ENCODE measurements at regions of chr14 and their contacts with region 1.

Region 1: GRCh38 chr14:22766456-22767322 is at the start of gene OXA1L:
- DNase-seq: peak; percentile 95 to 98 (median 98)
- H3K4me3 ChIP-seq: peak within 1 kb of the TSS; percentile 62 to 88
- H3K4me3 Mint-ChIP-seq: peak within 1 kb of the TSS; percentile 85 to 96 (median 94)
- H3K27ac ChIP-seq: peak within 1 kb of the TSS; percentile 88
- H3K27ac Mint-ChIP-seq: peak within 1 kb of the TSS; percentile 86 to 100 (median 98)
- H3K4me1 ChIP-seq: peaks cover 24% of the 10 kb centered on the region
- H3K4me1 Mint-ChIP-seq: peaks cover 26 to 39% (median 34%) of the 10 kb centered on the region in 4 donors
- H3K27me3 ChIP-seq: no peaks in the 10 kb centered on the region
- H3K27me3 Mint-ChIP-seq: no peaks in the 10 kb centered on the region
- total RNA-seq, gene OXA1L: 129 to 137 TPM

Region 2: GRCh38 chr14:22713631-22713950 is 53.1 kb before region 1 on chr14:
- CTCF ChIA-PET with region 1: no interaction called
- POLR2A ChIA-PET with region 1: no interaction called
- intact Hi-C with region 1: loop called (anchors 2 kb)
- DNase-seq: no peak
- H3K4me3 ChIP-seq: peak overlapping the region in 1 of 2 donors; percentile 28
- H3K4me3 Mint-ChIP-seq: peak overlapping the region; percentile 81 to 92 (median 86)
- H3K27ac ChIP-seq: no peak overlapping the region
- H3K27ac Mint-ChIP-seq: peak overlapping the region in 3 of 7 donors; percentile 48 to 94 (median 81)
- H3K4me1 ChIP-seq: no peaks in the 10 kb centered on the region
- H3K4me1 Mint-ChIP-seq: peaks cover 5 to 13% (median 10%) of the 10 kb centered on the region in 4 donors
- H3K27me3 ChIP-seq: no peaks in the 10 kb centered on the region
- H3K27me3 Mint-ChIP-seq: peaks cover 13 to 31% of the 10 kb centered on the region in 2 donors

Region 3: GRCh38 chr14:22802860-22803686 is 36.4 kb after region 1 on chr14:
- CTCF ChIA-PET with region 1: no interaction called
- POLR2A ChIA-PET with region 1: no interaction called
- intact Hi-C with region 1: no loop called
- DNase-seq: no peak
- H3K4me3 ChIP-seq: no peak overlapping the region
- H3K4me3 Mint-ChIP-seq: no peak overlapping the region
- H3K27ac ChIP-seq: no peak overlapping the region
- H3K27ac Mint-ChIP-seq: no peak overlapping the region
- H3K4me1 ChIP-seq: no peaks in the 10 kb centered on the region
- H3K4me1 Mint-ChIP-seq: no peaks in the 10 kb centered on the region
- H3K27me3 ChIP-seq: no peaks in the 10 kb centered on the region
- H3K27me3 Mint-ChIP-seq: peaks cover 32 to 33% of the 10 kb centered on the region in 2 donors

Region 4: DNA sequence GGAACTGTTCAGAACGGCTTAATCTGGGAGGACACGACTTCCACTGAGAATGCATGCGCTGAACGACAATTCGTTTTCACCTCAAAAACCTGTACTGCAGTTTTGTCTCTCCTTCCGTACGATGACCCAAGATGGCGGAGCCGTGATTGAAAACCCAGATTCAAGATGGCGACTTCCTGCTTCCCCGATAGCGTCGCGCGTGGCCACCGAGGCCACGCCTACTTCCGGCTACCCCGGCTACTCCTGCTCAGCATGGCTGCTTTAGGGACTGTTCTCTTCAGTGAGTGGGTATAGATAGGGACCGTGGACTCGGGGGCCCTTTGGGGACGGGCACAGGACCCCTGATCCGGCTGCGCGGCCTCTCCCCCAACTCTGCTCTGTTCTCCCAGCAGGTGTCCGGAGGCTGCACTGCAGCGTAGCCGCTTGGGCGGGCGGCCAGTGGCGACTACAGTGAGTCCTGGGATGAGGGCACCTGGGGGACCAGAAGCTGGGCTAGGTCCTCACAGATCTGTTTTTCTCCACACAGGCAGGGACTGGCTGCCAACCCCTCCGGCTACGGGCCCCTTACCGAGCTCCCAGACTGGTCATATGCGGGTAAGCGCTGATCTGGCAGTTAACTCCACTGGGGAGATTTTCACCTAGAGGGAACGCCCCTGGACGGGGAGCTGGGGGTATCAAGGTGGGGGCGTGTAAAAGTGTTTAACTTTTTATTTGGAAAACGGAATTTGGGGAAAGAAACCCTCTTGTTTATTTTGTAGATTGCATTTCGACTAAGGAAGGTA is 63.2 kb after region 1 on chr14 and contains the start of gene MRPL52:
- CTCF ChIA-PET with region 1: no interaction called
- POLR2A ChIA-PET with region 1: interaction called, 12 read pairs
- intact Hi-C with region 1: loop called (anchors 1 kb)
- DNase-seq: peak; percentile 86 to 93 (median 88)
- H3K4me3 ChIP-seq: peak within 1 kb of the TSS; percentile 80 to 85
- H3K4me3 Mint-ChIP-seq: peak within 1 kb of the TSS; percentile 91 to 96 (median 92)
- H3K27ac ChIP-seq: peak within 1 kb of the TSS; percentile 85
- H3K27ac Mint-ChIP-seq: peak within 1 kb of the TSS; percentile 96 to 99 (median 98)
- H3K4me1 ChIP-seq: peaks cover 18% of the 10 kb centered on the region
- H3K4me1 Mint-ChIP-seq: peaks cover 17 to 32% (median 24%) of the 10 kb centered on the region in 4 donors
- H3K27me3 ChIP-seq: no peaks in the 10 kb centered on the region
- H3K27me3 Mint-ChIP-seq: peaks cover 0 to 1% of the 10 kb centered on the region in 2 donors
- total RNA-seq, gene MRPL52: 58.0 to 68.3 TPM

Region 5: GRCh38 chr14:22908601-22909000 is 141.9 kb after region 1 on chr14:
- CTCF ChIA-PET with region 1: no interaction called
- POLR2A ChIA-PET with region 1: no interaction called
- intact Hi-C with region 1: no loop called
- DNase-seq: no peak
- H3K4me3 ChIP-seq: no peak overlapping the region
- H3K4me3 Mint-ChIP-seq: no peak overlapping the region
- H3K27ac ChIP-seq: no peak overlapping the region
- H3K27ac Mint-ChIP-seq: peak overlapping the region in 2 of 7 donors; percentile 42 to 75
- H3K4me1 ChIP-seq: peaks cover 10% of the 10 kb centered on the region
- H3K4me1 Mint-ChIP-seq: peaks cover 10 to 21% (median 17%) of the 10 kb centered on the region in 4 donors
- H3K27me3 ChIP-seq: no peaks in the 10 kb centered on the region
- H3K27me3 Mint-ChIP-seq: no peaks in the 10 kb centered on the region

Region 6: GRCh38 chr14:23034483-23035302 is 268.0 kb after region 1 on chr14 and contains the start of gene PSMB5:
- CTCF ChIA-PET with region 1: no interaction called
- POLR2A ChIA-PET with region 1: no interaction called
- intact Hi-C with region 1: loop called (anchors 1 kb)
- DNase-seq: peak; percentile 93 to 96 (median 93)
- H3K4me3 ChIP-seq: peak within 1 kb of the TSS; percentile 66 to 90
- H3K4me3 Mint-ChIP-seq: peak within 1 kb of the TSS; percentile 87 to 98 (median 93)
- H3K27ac ChIP-seq: peak within 1 kb of the TSS; percentile 89
- H3K27ac Mint-ChIP-seq: peak within 1 kb of the TSS; percentile 89 to 99 (median 98)
- H3K4me1 ChIP-seq: peaks cover 19% of the 10 kb centered on the region
- H3K4me1 Mint-ChIP-seq: peaks cover 17 to 43% (median 31%) of the 10 kb centered on the region in 4 donors
- H3K27me3 ChIP-seq: no peaks in the 10 kb centered on the region
- H3K27me3 Mint-ChIP-seq: no peaks in the 10 kb centered on the region
- total RNA-seq, gene PSMB5: 31.4 to 33.6 TPM

Measured in CD4-positive, alpha-beta memory T cell (primary cell).